ENCODE measurements at regions of chr20 and their contacts with region 1.

Region 1: GRCh38 chr20:44609511-44610312 is 27.3 kb downstream of the PKIG start:
- DNase-seq: peak; percentile 95
- H3K4me3 ChIP-seq: no peak overlapping the region
- H3K27ac ChIP-seq: peak overlapping the region; percentile 35
- H3K4me1 ChIP-seq: peaks cover 11% of the 10 kb centered on the region
- H3K27me3 ChIP-seq: no peaks in the 10 kb centered on the region
- CTCF ChIP-seq: peak; percentile 96

Region 2: DNA sequence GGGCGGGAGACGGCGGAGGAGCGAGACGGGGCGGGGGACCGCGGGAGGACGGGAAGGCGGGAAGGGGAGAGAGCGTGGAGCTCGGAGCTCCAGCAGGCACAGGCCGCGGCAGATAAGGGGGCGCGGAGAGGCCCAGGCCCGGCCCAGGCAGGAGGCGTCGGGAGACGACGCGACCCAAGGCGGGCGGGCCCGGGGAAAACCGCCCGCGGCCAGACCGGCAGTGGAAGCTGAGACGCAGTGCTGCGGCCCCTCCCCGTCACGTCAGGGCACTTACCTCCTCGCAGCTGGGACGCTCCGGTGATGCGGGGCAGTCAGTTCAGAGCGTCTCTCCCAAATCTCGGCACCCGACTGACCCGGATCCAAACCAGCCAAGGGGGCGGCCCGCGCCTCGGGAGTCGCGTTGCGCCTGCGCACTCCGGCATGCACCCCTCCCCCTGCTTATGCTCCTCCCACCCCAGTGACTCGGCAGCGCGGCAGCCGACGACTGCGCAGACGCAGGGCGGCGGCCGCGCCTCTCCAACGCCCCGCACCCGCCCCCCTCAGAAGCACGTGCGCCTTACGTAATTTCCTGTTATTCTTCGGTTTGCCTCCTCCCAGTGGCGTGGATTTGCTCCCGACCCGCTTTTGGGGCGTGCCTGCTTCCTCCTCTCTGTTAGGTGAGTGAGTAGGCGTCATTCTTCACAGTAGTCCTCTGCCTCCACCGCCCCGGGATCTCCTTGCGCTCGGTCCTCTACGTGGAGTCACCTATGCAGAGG is 399.1 kb before region 1 on chr20 and contains the start of gene OSER1:
- intact Hi-C with region 1: loop called (anchors 10 kb)
- DNase-seq: peak; percentile 99
- H3K4me3 ChIP-seq: peak within 1 kb of the TSS; percentile 89
- H3K27ac ChIP-seq: peak within 1 kb of the TSS; percentile 99
- H3K4me1 ChIP-seq: peaks cover 3% of the 10 kb centered on the region
- H3K27me3 ChIP-seq: no peaks in the 10 kb centered on the region
- CTCF ChIP-seq: no peak
- total RNA-seq, gene OSER1: 23.3 to 31.9 TPM

Region 3: GRCh38 chr20:44394702-44395460 is 214.8 kb before region 1 on chr20:
- intact Hi-C with region 1: loop called (anchors 5 kb)
- DNase-seq: no peak
- H3K4me3 ChIP-seq: no peak overlapping the region
- H3K27ac ChIP-seq: no peak overlapping the region
- H3K4me1 ChIP-seq: peaks cover 4% of the 10 kb centered on the region
- H3K27me3 ChIP-seq: no peaks in the 10 kb centered on the region
- CTCF ChIP-seq: no peak

Region 4: DNA sequence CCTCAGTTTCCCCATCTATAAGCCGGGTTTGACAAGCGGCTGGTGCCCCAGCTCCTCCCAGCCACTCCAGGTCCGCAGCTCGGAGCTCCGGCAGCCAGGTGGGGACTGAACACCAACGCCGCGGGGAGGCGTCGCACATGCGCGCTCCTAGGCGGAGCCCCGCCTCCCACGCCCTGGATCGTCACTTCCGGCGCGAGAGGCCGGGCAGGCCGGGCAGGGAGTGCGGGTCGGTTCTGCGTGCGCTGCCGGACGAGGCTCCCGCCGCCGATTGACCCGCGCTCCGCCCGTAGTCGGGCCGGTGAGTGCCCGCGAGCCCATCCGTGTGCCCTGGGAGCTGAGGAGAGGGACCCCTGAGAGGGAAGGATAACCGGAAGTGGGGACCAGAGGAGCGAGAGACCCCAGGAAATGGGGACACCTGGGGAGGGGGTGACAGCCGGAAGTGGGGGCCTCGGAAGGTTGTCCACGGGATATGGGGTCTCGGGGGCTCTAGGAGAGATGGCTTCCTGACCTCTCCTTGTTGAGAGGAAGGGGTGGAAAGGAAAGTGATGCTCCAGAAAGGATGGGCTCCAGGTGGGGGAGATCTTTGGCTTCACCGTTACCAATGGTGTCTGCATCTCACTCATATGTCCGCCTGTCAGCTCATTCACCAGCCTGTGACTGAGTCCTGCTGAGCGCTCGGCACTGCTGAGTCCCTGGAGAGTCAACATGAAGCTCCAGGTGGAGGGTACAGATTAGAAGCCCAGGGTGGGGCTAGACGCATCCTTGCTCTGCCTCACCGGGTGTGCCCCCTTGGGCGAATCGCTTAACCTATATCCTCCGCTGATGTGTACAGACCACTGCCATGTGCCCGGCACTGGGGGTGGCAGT is 133.8 kb before region 1 on chr20 and contains the start of gene TTPAL:
- intact Hi-C with region 1: loop called (anchors 2 kb)
- DNase-seq: peak; percentile 93
- H3K4me3 ChIP-seq: peak within 1 kb of the TSS; percentile 68
- H3K27ac ChIP-seq: peak within 1 kb of the TSS; percentile 72
- H3K4me1 ChIP-seq: no peaks in the 10 kb centered on the region
- H3K27me3 ChIP-seq: no peaks in the 10 kb centered on the region
- CTCF ChIP-seq: no peak
- total RNA-seq, gene TTPAL: 8.4 to 11.6 TPM

Region 5: DNA sequence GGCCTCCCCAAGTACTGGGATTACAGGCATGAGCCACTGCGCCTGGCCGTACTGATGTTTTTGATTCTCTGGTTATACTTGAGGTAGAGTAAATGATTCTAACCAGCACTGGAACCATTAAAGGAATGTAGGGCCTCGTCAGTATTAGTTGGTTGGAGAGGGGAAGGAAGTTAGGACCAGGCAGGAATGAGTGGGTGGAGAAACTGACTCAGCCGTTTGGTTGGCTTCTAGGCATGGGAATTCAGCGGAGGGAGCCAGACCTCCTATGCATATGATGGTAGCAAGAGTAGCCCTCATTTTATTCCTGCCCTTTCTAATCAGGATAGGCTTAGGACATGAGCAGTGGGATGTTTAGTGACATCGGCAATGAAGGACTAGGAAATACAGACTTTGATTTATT is 68.9 kb before region 1 on chr20:
- intact Hi-C with region 1: loop called (anchors 5 kb)
- DNase-seq: peak; percentile 11
- H3K4me3 ChIP-seq: no peak overlapping the region
- H3K27ac ChIP-seq: no peak overlapping the region
- H3K4me1 ChIP-seq: no peaks in the 10 kb centered on the region
- H3K27me3 ChIP-seq: no peaks in the 10 kb centered on the region
- CTCF ChIP-seq: no peak